H1 (cell line): ENCODE measurements at regions of chr1 and their contacts with region 1.

Region 1: GRCh38 chr1:48803474-48803873 is 26.8 kb upstream of the BEND5 start:
- DNase-seq: no peak
- H3K4me3 ChIP-seq: no peak overlapping the region
- H3K27ac ChIP-seq: no peak overlapping the region
- H3K4me1 ChIP-seq: peaks cover 0 to 5% (median 2%) of the 10 kb centered on the region in 4 experiments; a peak in 5 of 7 replicates
- H3K27me3 ChIP-seq: no peaks in the 10 kb centered on the region
- CTCF ChIP-seq: no peak
- EP300 ChIP-seq: no peak
- POLR2A ChIP-seq: no peak
- RAD21 ChIP-seq: no peak

Region 2: DNA sequence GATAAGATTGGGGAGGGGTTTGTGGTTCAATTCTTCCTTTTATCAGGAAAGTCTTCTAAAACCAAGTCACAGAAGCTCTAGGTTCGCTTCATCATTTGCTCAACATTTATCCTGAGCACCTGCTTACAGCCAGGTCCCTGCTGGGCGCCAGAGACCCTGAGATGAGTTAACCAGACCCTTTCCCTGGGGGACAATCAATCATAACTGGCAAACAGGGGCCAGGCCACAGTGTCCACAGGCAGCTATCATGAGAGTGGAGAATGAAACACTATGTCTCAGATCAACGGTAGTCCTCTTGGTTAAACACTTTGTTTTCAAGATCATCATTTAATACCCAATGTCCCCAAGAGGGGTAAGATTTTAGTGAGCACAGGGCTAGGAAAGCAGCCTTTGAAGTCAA is 173.6 kb before region 1 on chr1:
- CTCF ChIA-PET with region 1: no interaction called
- POLR2A ChIA-PET with region 1: no interaction called
- DNase-seq: no peak
- H3K4me3 ChIP-seq: no peak overlapping the region
- H3K27ac ChIP-seq: no peak overlapping the region
- H3K4me1 ChIP-seq: no peaks in the 10 kb centered on the region
- H3K27me3 ChIP-seq: no peaks in the 10 kb centered on the region
- CTCF ChIP-seq: no peak
- EP300 ChIP-seq: no peak
- POLR2A ChIP-seq: no peak
- RAD21 ChIP-seq: no peak

Region 3: DNA sequence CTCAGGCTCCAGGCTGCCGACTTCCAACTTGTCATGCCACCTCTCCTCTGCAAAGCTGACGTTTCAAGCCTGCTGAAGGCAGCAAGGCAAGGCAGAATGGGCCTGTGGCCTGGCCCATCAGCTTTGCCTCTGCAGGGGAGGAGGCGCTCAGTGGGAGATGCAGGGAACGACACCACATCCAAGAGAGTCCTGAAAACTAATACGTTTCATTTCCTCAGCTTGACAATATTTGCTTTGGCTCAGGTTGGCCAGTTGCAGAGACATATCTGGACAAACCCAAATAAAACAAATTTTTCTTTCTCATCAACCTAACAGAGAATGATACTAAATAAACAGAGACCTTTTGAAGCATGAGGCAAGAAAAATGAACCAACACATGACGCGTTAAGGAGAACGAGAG is 62.1 kb before region 1 on chr1:
- CTCF ChIA-PET with region 1: no interaction called
- POLR2A ChIA-PET with region 1: no interaction called
- DNase-seq: no peak
- H3K4me3 ChIP-seq: no peak overlapping the region
- H3K27ac ChIP-seq: no peak overlapping the region
- H3K4me1 ChIP-seq: no peaks in the 10 kb centered on the region; a peak in 1 of 7 replicates
- H3K27me3 ChIP-seq: no peaks in the 10 kb centered on the region
- CTCF ChIP-seq: no peak
- EP300 ChIP-seq: no peak
- POLR2A ChIP-seq: no peak
- RAD21 ChIP-seq: no peak

Region 4: GRCh38 chr1:48771561-48771960 is 31.9 kb before region 1 on chr1:
- CTCF ChIA-PET with region 1: no interaction called
- POLR2A ChIA-PET with region 1: no interaction called
- DNase-seq: no peak
- H3K4me3 ChIP-seq: no peak overlapping the region
- H3K27ac ChIP-seq: no peak overlapping the region
- H3K4me1 ChIP-seq: peaks cover 0 to 4% (median 0%) of the 10 kb centered on the region in 4 experiments; a peak in 1 of 7 replicates
- H3K27me3 ChIP-seq: no peaks in the 10 kb centered on the region
- CTCF ChIP-seq: no peak
- EP300 ChIP-seq: no peak
- POLR2A ChIP-seq: no peak
- RAD21 ChIP-seq: no peak

Region 5: GRCh38 chr1:48817505-48818114 is 14.1 kb after region 1 on chr1:
- CTCF ChIA-PET with region 1: interaction called, 18 read pairs
- POLR2A ChIA-PET with region 1: no interaction called
- DNase-seq: peak; percentile 31 to 76
- H3K4me3 ChIP-seq: no peak overlapping the region
- H3K27ac ChIP-seq: no peak overlapping the region
- H3K4me1 ChIP-seq: no peaks in the 10 kb centered on the region
- H3K27me3 ChIP-seq: no peaks in the 10 kb centered on the region
- CTCF ChIP-seq: peak; percentile 88 to 93 (median 91)
- EP300 ChIP-seq: no peak
- POLR2A ChIP-seq: no peak
- RAD21 ChIP-seq: peak; percentile 88 to 92

Region 6: DNA sequence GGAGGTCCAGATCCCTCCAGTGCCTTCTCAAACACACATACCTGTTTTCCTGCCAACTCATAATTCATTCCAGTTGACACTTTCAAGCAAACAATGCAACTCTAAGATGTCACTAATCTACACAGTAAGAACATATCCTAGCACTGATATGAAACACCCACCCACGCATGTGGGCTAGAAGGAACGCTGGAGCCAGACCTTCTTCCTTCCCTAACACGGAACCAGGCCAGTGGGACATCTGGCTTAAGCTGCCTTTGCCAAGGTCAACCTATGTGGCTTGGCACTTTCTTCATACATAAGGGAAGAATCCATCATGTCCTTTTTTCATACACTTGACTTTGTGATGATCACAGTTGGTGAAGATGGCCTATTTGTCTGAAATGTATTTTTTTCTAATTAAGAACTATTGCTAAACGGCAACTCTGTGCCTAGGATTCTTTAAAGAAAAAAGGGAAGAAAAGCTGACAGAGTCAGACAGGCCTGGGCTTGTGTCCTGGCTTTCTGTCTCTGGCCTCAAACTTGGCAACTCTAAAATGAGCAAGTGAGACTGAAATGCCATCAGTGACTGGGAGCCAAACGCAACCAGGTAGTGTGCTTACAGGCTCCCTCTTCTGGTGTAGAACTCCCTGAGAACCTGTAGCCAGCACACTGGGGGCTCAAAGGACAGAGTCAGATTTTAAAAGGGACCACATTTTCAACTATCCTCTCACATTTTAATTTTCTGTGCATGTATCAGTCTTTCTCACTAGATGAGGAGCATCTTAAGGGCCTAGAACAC is 65.8 kb after region 1 on chr1:
- CTCF ChIA-PET with region 1: no interaction called
- POLR2A ChIA-PET with region 1: no interaction called
- DNase-seq: no peak
- H3K4me3 ChIP-seq: no peak overlapping the region
- H3K27ac ChIP-seq: no peak overlapping the region
- H3K4me1 ChIP-seq: peaks cover 0 to 9% (median 0%) of the 10 kb centered on the region in 4 experiments; a peak in 3 of 7 replicates
- H3K27me3 ChIP-seq: 0 out of 7 replicates have a peak, but pooled peaks cover 0 to 2% (median 0%) of the 10 kb centered on the region in 4 experiments
- CTCF ChIP-seq: peak; percentile 27 to 52 (median 48)
- EP300 ChIP-seq: no peak
- POLR2A ChIP-seq: no peak
- RAD21 ChIP-seq: peak; percentile 33 to 53; a peak in 3 of 4 replicates